WTC11 (cell line): ENCODE measurements at regions of chr9 and their contacts with region 1.

Region 1: GRCh38 chr9:129720181-129720864 is 32.5 kb downstream of the PTGES start:
- DNase-seq: peak; percentile 85
- ATAC-seq: peak; percentile 91
- H3K4me3 Mint-ChIP-seq: no peak overlapping the region
- H3K27ac Mint-ChIP-seq: no peak overlapping the region
- H3K4me1 Mint-ChIP-seq: no peaks in the 10 kb centered on the region
- H3K27me3 Mint-ChIP-seq: peaks cover 3% of the 10 kb centered on the region; the same call in 1 of the 2 replicates
- CTCF ChIP-seq: peak; percentile 68

Region 2: DNA sequence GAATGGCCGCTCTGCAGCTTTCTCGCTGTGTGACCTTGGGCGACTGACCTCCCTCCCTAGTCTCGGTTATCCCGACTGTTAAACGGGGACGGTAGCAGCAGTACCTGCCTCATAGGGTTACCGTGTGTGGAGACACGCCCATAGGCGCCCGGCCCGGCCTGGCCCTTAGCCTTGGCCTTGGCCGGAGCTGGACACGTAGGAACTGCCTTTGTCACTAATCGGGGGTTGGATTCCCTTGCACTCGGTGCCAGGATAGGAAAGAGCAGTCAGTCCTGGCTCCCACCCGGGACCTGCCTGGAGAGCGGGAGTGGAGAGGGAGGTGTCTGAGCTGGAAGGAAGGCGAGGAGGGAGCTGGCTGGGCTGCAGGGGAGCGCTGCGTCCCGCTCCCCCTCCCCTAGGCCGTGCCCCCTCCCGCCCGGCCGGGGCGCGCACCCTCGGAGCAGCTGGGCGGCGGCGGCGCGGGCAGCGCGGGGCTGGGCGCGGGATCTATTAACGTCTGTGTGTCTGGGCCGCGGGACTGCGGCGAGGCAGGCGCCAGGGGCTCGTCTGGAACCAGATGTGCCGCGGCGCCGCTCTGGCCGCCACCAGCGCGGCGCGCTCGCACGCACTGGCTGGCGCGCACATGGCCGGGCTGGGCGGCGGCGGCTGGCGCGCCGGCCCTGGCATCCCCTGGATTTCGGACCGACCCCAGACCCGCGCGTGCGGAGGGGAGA is 23.2 kb before region 1 on chr9:
- CTCF ChIA-PET with region 1: interaction called, 16 read pairs
- POLR2A ChIA-PET with region 1: no interaction called
- DNase-seq: peak; percentile 44
- ATAC-seq: peak; percentile 68
- H3K4me3 Mint-ChIP-seq: peak overlapping the region; percentile 91
- H3K27ac Mint-ChIP-seq: no peak overlapping the region
- H3K4me1 Mint-ChIP-seq: peaks cover 10% of the 10 kb centered on the region
- H3K27me3 Mint-ChIP-seq: peaks cover 13% of the 10 kb centered on the region
- CTCF ChIP-seq: no peak